ENCODE measurements at regions of chr22 and their contacts with region 1.

Region 1: GRCh38 chr22:31230871-31231621 is 18.9 kb downstream of the LIMK2 start:
- DNase-seq: peak; percentile 87
- H3K4me3 Mint-ChIP-seq: peak overlapping the region; percentile 59
- H3K27ac Mint-ChIP-seq: peak overlapping the region; percentile 30
- H3K4me1 Mint-ChIP-seq: peaks cover 44% of the 10 kb centered on the region
- H3K27me3 Mint-ChIP-seq: no peaks in the 10 kb centered on the region

Region 2: DNA sequence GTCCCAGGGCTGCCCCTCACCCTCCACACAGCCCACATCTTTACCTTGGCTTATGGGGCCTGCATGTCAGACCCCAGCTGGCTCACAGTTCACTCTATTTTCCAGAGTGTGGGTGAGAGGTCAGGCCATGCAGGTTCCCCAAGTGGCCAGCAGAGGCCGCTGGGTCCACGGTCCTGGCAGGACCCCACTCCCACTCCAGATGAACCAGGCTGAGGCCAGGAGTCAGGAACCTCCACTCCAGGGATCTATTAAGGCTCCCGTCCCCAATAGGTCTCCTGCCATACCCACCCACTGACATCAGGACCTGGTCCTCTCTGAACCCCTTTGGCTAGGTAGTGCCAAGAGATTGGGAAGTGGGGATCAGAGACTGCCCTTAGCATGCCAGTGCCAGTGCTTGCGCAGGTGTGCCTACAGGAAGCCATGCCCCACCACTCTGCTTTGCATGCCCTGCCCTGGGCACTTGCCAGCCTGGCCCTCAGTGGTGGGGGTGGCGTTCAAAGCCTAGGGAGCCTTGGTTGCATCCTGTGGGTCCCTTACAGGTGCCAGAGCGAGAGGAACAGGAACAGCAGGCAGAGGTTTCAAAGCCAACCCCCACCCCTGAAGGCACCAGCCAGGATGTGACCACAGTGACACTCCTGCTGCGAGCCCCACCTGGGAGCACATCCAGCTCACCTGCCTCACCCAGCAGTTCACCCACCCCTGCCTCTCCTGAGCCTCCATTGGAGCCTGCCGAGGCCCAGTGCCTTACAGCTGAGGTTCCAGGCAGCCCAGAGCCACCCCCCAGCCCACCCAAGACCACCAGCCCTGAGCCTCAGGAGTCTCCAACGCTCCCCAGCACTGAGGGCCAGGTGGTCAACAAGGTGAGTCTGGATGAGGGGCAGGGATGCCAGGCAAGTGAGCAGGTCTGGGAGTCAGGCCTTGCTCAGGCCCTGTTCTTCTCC is 141.6 kb before region 1 on chr22:
- intact Hi-C with region 1: loop called (anchors 1 kb)
- DNase-seq: peak; percentile 81
- H3K4me3 Mint-ChIP-seq: no peak overlapping the region
- H3K27ac Mint-ChIP-seq: no peak overlapping the region
- H3K4me1 Mint-ChIP-seq: peaks cover 3% of the 10 kb centered on the region
- H3K27me3 Mint-ChIP-seq: no peaks in the 10 kb centered on the region

Region 3: DNA sequence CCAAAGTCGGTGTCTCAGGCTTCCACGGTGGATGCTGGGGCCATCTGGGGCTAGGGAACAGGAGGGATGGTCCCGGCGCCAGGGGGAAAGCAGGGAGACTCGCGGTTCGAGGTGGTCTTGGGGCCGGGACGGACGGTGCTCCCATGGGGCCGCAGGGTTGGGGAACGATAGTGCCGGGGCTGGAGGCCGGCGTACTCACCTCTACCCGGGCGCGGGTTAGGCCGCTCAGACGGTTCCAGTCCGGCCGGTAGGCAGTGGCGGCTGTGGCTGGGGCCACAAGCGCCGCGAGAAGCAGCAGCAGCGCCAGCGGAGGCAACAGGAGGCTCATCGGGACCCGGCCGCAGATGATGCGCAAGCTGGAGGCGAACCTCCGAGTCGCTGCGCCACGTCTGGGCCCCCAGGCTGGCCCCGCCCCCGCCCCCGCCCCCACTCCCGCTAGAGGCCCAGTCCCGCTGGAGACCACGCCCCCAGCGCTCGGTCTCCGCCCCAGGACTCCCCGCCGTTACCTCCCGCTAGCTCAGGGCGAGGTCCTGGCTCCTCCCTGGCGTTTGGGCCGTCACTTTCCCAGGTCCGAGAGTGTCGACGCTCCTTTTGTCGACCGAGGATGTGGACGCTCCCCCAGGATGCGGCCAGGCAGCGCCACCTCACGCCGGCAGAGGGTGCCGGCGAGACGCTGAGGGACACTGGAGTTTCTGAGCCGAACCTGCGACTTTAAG is 123.7 kb before region 1 on chr22 and contains the start of gene SELENOM:
- intact Hi-C with region 1: loop called (anchors 1 kb)
- DNase-seq: peak; percentile 97
- H3K4me3 Mint-ChIP-seq: peak within 1 kb of the TSS; percentile 87
- H3K27ac Mint-ChIP-seq: peak within 1 kb of the TSS; percentile 55
- H3K4me1 Mint-ChIP-seq: peaks cover 12% of the 10 kb centered on the region
- H3K27me3 Mint-ChIP-seq: peaks cover 2% of the 10 kb centered on the region
- total RNA-seq, gene SELENOM: 7.4 and 8.2 TPM in 2 replicates

Region 4: GRCh38 chr22:31160328-31160978 is 70.6 kb before region 1 on chr22:
- intact Hi-C with region 1: loop called (anchors 5 kb)
- DNase-seq: peak; percentile 73
- H3K4me3 Mint-ChIP-seq: peak overlapping the region; percentile 99
- H3K27ac Mint-ChIP-seq: peak overlapping the region; percentile 97
- H3K4me1 Mint-ChIP-seq: peaks cover 29% of the 10 kb centered on the region
- H3K27me3 Mint-ChIP-seq: peaks cover 4% of the 10 kb centered on the region

Region 5: GRCh38 chr22:31211862-31212730 is 18.9 kb before region 1 on chr22 and contains the start of gene LIMK2:
- intact Hi-C with region 1: loop called (anchors 1 kb)
- DNase-seq: peak; percentile 99
- H3K4me3 Mint-ChIP-seq: peak within 1 kb of the TSS; percentile 88
- H3K27ac Mint-ChIP-seq: peak within 1 kb of the TSS; percentile 86
- H3K4me1 Mint-ChIP-seq: peaks cover 43% of the 10 kb centered on the region
- H3K27me3 Mint-ChIP-seq: no peaks in the 10 kb centered on the region
- total RNA-seq, gene LIMK2: 34.2 and 35.9 TPM in 2 replicates

Region 6: GRCh38 chr22:31313366-31314147 is 82.5 kb after region 1 on chr22:
- intact Hi-C with region 1: loop called (anchors 5 kb)
- DNase-seq: peak; percentile 89
- H3K4me3 Mint-ChIP-seq: no peak overlapping the region
- H3K27ac Mint-ChIP-seq: no peak overlapping the region
- H3K4me1 Mint-ChIP-seq: peaks cover 7% of the 10 kb centered on the region
- H3K27me3 Mint-ChIP-seq: no peaks in the 10 kb centered on the region

Measured in activated CD4-positive, alpha-beta T cell treated with anti-CD3 and anti-CD28 coated beads, Interleukin-2, amount 10 ng/mL, durations not matched to agents 24 days and 14 days (primary cell).